Mammary epithelial cell (primary cell): ENCODE measurements at regions of chr1 and their contacts with region 1.

Region 1: DNA sequence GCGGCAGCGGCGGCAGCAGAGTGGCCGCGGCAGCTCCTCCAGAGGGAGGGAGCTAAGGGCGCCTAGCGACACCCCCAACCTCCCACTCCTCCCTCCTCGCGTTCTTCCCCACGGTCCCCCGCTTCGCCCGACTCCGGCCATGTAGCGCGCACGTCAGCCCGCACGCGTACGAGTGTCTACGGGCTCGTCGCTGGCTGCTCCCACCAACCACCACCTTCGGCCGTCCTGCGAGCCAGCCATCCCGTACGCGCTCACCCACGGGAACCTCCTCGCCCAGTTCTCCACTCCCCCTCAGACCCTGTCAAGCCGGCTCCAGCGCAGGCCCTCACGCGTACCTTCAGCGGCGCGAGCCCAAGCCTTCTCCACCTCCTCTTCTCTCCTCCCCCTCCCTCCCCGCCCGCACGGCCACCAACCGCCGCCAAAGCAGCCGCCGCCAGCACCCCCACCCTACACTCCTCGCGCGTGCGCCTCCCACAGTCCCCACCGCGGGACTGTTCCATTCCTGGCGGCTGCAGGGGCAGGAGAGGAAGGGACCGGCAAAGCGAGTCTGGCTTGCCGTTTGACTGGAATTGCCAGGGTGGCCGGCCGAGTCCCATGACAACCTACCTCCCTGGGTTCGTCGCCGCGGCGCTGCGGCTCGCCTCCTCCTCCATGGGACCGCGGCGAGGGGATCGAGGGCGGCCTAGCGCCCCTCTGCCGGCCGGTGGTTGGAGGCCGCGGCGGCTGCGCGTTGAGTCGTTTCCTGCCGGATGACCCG is at the start of gene YY1AP1:
- DNase-seq: peak; percentile 91
- H3K4me3 ChIP-seq: peak within 1 kb of the TSS; percentile 56 to 100 (median 87)
- H3K27ac ChIP-seq: peak within 1 kb of the TSS; percentile 83
- H3K4me1 ChIP-seq: peaks cover 15% of the 10 kb centered on the region
- H3K27me3 ChIP-seq: no peaks in the 10 kb centered on the region
- CTCF ChIP-seq: no peak
- total RNA-seq, gene YY1AP1: 40.2 to 46.8 TPM

Region 2: GRCh38 chr1:155669233-155670162 is 19.0 kb before region 1 on chr1:
- CTCF ChIA-PET with region 1: no interaction called
- dilution Hi-C with region 1: no loop called
- in situ Hi-C with region 1: no loop called
- intact Hi-C with region 1: no loop called
- DNase-seq: no peak
- H3K4me3 ChIP-seq: no peak overlapping the region
- H3K27ac ChIP-seq: no peak overlapping the region
- H3K4me1 ChIP-seq: no peaks in the 10 kb centered on the region
- H3K27me3 ChIP-seq: no peaks in the 10 kb centered on the region
- CTCF ChIP-seq: no peak

Region 3: GRCh38 chr1:155729031-155729898 is 40.8 kb after region 1 on chr1:
- CTCF ChIA-PET with region 1: no interaction called
- dilution Hi-C with region 1: no loop called
- in situ Hi-C with region 1: no loop called
- intact Hi-C with region 1: loop called (anchors 5 kb)
- DNase-seq: peak; percentile 66
- H3K4me3 ChIP-seq: no peak overlapping the region
- H3K27ac ChIP-seq: no peak overlapping the region
- H3K4me1 ChIP-seq: no peaks in the 10 kb centered on the region
- H3K27me3 ChIP-seq: no peaks in the 10 kb centered on the region
- CTCF ChIP-seq: peak; percentile 66 to 72